Naive thymus-derived CD4-positive, alpha-beta T cell (primary cell): ENCODE measurements at regions of chr10 and their contacts with region 1.

Region 1: GRCh38 chr10:19730167-19730906 is 85.9 kb upstream of the PLXDC2 start:
- DNase-seq: no peak
- ATAC-seq: peak; percentile 45
- H3K4me3 ChIP-seq: no peak overlapping the region
- H3K4me3 Mint-ChIP-seq: no peak overlapping the region
- H3K27ac ChIP-seq: no peak overlapping the region
- H3K27ac Mint-ChIP-seq: no peak overlapping the region
- H3K4me1 ChIP-seq: no peaks in the 10 kb centered on the region
- H3K4me1 Mint-ChIP-seq: peaks cover 0 to 3% (median 0%) of the 10 kb centered on the region in 7 donors
- H3K27me3 ChIP-seq: no peaks in the 10 kb centered on the region
- H3K27me3 Mint-ChIP-seq: no peaks in the 10 kb centered on the region

Region 2: GRCh38 chr10:19811540-19811939 is 81.2 kb after region 1 on chr10:
- CTCF ChIA-PET with region 1: no interaction called
- POLR2A ChIA-PET with region 1: no interaction called
- intact Hi-C with region 1: no loop called
- DNase-seq: no peak
- ATAC-seq: peak; percentile 46
- H3K4me3 ChIP-seq: no peak overlapping the region
- H3K4me3 Mint-ChIP-seq: no peak overlapping the region
- H3K27ac ChIP-seq: no peak overlapping the region
- H3K27ac Mint-ChIP-seq: no peak overlapping the region
- H3K4me1 ChIP-seq: no peaks in the 10 kb centered on the region
- H3K4me1 Mint-ChIP-seq: peaks cover 0 to 5% (median 2%) of the 10 kb centered on the region in 7 donors
- H3K27me3 ChIP-seq: no peaks in the 10 kb centered on the region
- H3K27me3 Mint-ChIP-seq: peaks cover 20 to 39% (median 29%) of the 10 kb centered on the region in 5 donors

Region 3: DNA sequence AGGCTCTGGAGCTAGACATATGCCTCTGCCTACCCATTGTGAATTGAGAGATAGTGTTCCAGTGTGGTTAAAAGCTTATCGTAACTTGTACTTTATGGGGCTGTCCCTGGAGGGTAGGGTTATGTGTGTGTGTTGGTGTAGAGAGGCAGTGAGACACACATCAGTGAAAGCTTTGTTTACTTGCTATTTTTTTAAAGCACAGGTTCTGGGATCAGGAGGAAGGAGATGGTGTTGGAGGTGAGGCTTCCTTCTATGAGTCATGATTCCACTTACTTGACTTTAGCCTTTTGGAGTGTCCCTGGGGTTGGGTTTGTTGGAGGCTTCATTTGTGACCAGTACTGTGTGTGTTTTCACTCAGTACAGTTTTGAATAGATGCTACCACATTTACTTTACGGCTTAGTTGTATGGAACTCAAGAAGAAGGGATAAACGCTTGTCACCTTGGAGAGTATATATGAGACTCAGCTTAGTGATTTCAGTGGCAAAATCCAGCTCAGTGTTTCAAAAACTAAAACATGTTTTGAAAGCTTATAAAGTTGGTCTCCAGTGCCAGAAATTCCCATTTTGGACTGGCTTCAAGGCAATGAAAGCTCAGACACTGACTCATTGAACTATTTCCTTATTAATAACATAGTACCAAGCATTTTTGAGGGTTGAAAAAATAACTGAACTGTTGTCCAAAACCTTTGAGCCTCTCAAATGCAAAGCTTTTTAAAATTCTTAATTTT is 192.1 kb after region 1 on chr10:
- CTCF ChIA-PET with region 1: no interaction called
- POLR2A ChIA-PET with region 1: no interaction called
- intact Hi-C with region 1: loop called in 1 of 2 experiments (anchors 5 kb)
- DNase-seq: no peak
- ATAC-seq: no peak
- H3K4me3 ChIP-seq: no peak overlapping the region
- H3K4me3 Mint-ChIP-seq: no peak overlapping the region
- H3K27ac ChIP-seq: no peak overlapping the region
- H3K27ac Mint-ChIP-seq: no peak overlapping the region
- H3K4me1 ChIP-seq: no peaks in the 10 kb centered on the region
- H3K4me1 Mint-ChIP-seq: no peaks in the 10 kb centered on the region
- H3K27me3 ChIP-seq: no peaks in the 10 kb centered on the region
- H3K27me3 Mint-ChIP-seq: no peaks in the 10 kb centered on the region